ENCODE measurements at regions of chr19 and their contacts with region 1.

Region 1: GRCh38 chr19:43765109-43765876 is 10.5 kb upstream of the SMG9 start:
- H3K4me3 ChIP-seq: no peak overlapping the region
- H3K27ac ChIP-seq: peak overlapping the region; percentile 3; the same call in 1 of the 2 replicates
- H3K4me1 ChIP-seq: peaks cover 8% of the 10 kb centered on the region
- CTCF ChIP-seq: no peak

Region 2: DNA sequence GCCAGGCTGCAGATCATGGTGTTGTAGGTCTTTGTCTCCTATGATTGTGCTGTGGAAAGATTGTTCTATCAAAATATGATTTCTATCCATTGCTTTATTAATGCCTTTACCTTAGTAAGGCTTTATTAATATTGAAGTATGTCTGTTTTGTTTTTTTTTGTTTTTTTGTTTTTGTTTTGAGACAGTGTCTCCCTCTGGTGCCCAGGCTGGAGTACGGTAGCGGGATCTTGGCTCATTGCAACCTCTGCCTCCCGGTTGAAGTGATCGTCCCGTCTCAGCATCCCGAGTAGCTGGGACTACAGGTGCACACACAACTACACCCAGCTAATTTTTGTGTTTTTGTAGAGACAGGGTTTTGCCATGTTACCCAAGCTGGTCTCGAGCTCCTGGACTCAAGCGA is 41.7 kb before region 1 on chr19:
- CTCF ChIA-PET with region 1: interaction called, 18 read pairs
- POLR2A ChIA-PET with region 1: no interaction called
- H3K4me3 ChIP-seq: no peak overlapping the region
- H3K27ac ChIP-seq: no peak overlapping the region
- H3K4me1 ChIP-seq: no peaks in the 10 kb centered on the region
- CTCF ChIP-seq: peak; percentile 53

Region 3: DNA sequence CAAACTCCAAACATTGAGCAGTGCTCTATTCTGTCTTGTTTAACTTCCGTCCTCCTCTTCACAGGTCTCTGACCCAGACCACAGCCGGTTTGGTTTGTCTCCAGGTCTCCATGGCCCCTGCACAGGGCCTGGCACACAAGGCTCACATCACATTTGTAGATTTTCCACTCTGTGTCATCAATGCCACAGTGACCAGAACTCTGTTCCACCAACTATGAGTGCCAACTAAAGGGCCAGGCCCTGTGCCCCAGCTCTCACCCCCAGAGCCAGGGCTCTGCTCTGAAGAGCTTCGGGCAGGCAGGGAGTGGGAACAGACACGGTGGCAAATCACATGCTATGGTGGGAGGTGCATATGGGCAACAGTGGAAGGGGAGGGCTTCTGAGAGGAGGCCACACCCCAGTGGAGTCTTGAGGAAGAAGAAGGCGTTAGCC is 26.5 kb before region 1 on chr19:
- CTCF ChIA-PET with region 1: interaction called, 203 read pairs
- POLR2A ChIA-PET with region 1: interaction called, 4 read pairs
- H3K4me3 ChIP-seq: no peak overlapping the region
- H3K27ac ChIP-seq: no peak overlapping the region
- H3K4me1 ChIP-seq: no peaks in the 10 kb centered on the region
- CTCF ChIP-seq: no peak

Region 4: GRCh38 chr19:43747557-43748204 is 17.6 kb before region 1 on chr19:
- CTCF ChIA-PET with region 1: interaction called, 203 read pairs
- POLR2A ChIA-PET with region 1: interaction called, 5 read pairs
- H3K4me3 ChIP-seq: no peak overlapping the region
- H3K27ac ChIP-seq: 0 out of 2 replicates have a peak overlapping the region, but pooled peaks have one; percentile 17
- H3K4me1 ChIP-seq: no peaks in the 10 kb centered on the region; the same call in 1 of the 2 replicates
- CTCF ChIP-seq: no peak

Region 5: GRCh38 chr19:43754503-43755255 is 10.6 kb before region 1 on chr19 and contains the start of gene SMG9:
- CTCF ChIA-PET with region 1: interaction called, 151 read pairs
- POLR2A ChIA-PET with region 1: interaction called, 43 read pairs
- H3K4me3 ChIP-seq: peak within 1 kb of the TSS; percentile 60
- H3K27ac ChIP-seq: peak within 1 kb of the TSS; percentile 100
- H3K4me1 ChIP-seq: peaks cover 32% of the 10 kb centered on the region
- CTCF ChIP-seq: no peak; the same call in 1 of the 2 replicates

Region 6: DNA sequence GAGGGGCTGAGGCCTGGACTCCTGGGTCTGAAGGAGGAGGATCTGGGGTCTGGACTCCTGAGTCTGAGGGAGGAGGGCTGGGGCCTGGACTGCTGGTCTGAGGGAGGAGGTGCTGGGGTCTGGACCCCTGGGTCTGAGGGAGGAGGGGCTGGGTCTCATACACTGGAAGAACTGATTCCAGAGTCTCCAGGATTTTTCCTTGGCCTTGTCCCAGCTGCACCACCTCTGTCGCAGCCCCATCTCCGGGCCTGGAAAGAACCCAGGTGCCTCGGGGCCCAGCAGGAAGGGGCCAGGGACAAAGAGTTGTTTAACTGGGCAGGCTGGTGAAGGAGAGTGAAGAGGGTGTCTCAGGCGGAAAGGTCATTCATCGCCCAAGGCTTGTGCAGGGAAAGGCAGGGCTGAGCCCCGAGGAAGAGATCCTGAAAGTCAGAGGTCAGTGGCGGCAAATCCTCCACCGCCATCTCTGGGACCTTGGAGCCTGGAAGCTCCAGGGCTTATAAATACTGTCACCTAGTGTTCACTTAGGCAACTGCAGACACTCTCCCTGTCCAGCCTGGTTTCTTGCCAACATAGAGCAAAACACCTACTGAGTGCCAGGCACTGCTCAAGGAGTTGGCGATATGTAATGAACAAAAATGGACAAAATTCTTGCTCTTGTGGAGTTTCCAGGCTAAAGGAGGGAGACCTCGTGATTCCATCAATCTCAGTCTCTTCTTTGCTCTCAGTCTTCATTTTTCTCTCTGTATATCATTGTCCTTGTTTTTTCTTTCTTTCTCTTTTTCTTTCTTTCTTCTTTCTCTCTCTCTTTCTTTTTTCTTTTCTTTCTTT is 19.9 kb after region 1 on chr19:
- CTCF ChIA-PET with region 1: interaction called, 213 read pairs
- POLR2A ChIA-PET with region 1: no interaction called
- H3K4me3 ChIP-seq: no peak overlapping the region
- H3K27ac ChIP-seq: no peak overlapping the region
- H3K4me1 ChIP-seq: no peaks in the 10 kb centered on the region; the same call in 1 of the 2 replicates
- CTCF ChIP-seq: peak; percentile 99

Region 7: GRCh38 chr19:43809762-43810696 is 44.7 kb after region 1 on chr19:
- CTCF ChIA-PET with region 1: interaction called, 58 read pairs
- POLR2A ChIA-PET with region 1: interaction called, 3 read pairs
- H3K4me3 ChIP-seq: no peak overlapping the region
- H3K27ac ChIP-seq: no peak overlapping the region
- H3K4me1 ChIP-seq: no peaks in the 10 kb centered on the region
- CTCF ChIP-seq: no peak